ENCODE measurements at regions of chrX and their contacts with region 1.

Region 1: DNA sequence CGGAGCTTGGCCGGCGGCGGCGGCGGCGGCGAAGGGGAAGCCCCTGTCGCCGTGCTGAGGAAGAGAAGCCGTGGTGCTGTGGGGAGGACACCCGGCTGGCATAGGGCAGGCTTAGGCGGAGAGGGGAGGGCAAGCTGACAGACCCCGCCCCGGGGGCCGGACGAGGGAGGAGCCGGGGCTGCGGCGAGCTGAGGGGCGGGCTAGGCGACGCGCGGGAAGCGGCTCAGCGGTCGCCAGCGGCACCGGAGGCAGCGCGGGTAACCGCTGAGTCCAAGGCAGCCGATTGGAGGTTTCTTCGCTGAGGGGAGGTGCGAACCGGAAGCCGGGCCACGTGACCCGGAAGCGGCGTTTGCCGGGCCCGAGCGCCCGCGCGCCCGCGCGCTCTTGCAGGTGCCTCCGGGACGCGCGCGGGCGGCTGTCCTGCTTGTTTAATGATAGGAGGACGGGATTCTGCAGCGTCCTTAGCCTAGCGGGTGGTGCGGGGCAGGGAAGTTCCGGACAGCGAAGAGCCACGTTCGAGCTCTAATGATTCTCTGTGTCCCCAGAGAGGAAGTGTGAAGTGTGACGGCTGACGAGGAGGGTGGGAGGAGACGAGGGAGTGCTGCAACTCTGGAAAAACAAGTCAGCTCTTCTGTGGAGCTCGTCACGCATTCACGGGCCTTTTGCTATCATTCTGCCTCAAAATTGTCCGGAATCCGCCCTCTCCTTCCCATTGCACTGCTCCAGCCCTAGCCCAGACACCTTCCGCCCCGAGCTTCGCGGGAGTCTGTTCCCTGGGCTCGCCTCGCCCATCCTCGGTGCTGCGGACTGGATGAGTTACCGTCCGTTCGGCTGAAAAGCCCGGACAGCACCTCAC is at the start of gene AP1S2:
- DNase-seq: peak; percentile 95
- H3K4me3 ChIP-seq: peak within 1 kb of the TSS; percentile 17 to 84 (median 79)
- H3K27ac ChIP-seq: peak within 1 kb of the TSS; percentile 21
- H3K4me1 ChIP-seq: peaks cover 14% of the 10 kb centered on the region
- H3K27me3 ChIP-seq: no peaks in the 10 kb centered on the region
- CTCF ChIP-seq: no peak
- POLR2A ChIP-seq: no peak
- total RNA-seq, gene AP1S2: 25.0 and 37.3 TPM in 2 replicates

Region 2: GRCh38 chrX:15686818-15687685 is 167.9 kb before region 1 on chrX:
- CTCF ChIA-PET with region 1: no interaction called
- POLR2A ChIA-PET with region 1: no interaction called
- dilution Hi-C with region 1: no loop called
- intact Hi-C with region 1: loop called (anchors 2 kb)
- DNase-seq: peak; percentile 56
- H3K4me3 ChIP-seq: no peak overlapping the region
- H3K27ac ChIP-seq: no peak overlapping the region
- H3K4me1 ChIP-seq: no peaks in the 10 kb centered on the region
- H3K27me3 ChIP-seq: no peaks in the 10 kb centered on the region
- CTCF ChIP-seq: peak; percentile 47 to 55
- POLR2A ChIP-seq: no peak

Region 3: GRCh38 chrX:15973299-15973698 is 118.4 kb after region 1 on chrX:
- CTCF ChIA-PET with region 1: interaction called, 11 read pairs
- POLR2A ChIA-PET with region 1: no interaction called
- dilution Hi-C with region 1: no loop called
- intact Hi-C with region 1: loop called (anchors 5 kb)
- DNase-seq: peak; percentile 36
- H3K4me3 ChIP-seq: no peak overlapping the region
- H3K27ac ChIP-seq: no peak overlapping the region
- H3K4me1 ChIP-seq: no peaks in the 10 kb centered on the region
- H3K27me3 ChIP-seq: no peaks in the 10 kb centered on the region
- CTCF ChIP-seq: peak; percentile 26 to 41
- POLR2A ChIP-seq: no peak

Region 4: DNA sequence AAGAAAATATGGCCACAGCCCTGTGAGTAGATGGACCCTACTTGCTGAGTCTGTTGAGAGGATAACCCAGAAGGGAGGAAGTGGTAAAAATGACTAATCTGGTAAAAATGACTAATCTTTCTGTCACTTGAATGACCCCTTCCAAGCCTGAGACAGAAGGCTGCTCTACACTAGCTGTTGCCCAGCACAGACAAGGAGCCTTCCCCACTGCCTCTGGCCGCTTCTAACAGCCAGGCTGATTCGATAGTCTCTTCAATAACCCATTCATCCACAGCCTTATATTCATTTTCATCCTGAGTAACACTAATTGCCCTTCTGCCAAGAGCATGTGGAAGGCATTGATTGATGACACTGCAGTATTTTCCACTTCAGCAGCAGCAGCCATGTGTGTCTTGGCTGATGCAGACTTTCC is 330.8 kb after region 1 on chrX:
- CTCF ChIA-PET with region 1: no interaction called
- POLR2A ChIA-PET with region 1: no interaction called
- dilution Hi-C with region 1: no loop called
- intact Hi-C with region 1: loop called (anchors 2 kb)
- DNase-seq: peak; percentile 74
- H3K4me3 ChIP-seq: no peak overlapping the region
- H3K27ac ChIP-seq: no peak overlapping the region
- H3K4me1 ChIP-seq: peaks cover 31% of the 10 kb centered on the region
- H3K27me3 ChIP-seq: no peaks in the 10 kb centered on the region
- CTCF ChIP-seq: no peak
- POLR2A ChIP-seq: no peak

Region 5: DNA sequence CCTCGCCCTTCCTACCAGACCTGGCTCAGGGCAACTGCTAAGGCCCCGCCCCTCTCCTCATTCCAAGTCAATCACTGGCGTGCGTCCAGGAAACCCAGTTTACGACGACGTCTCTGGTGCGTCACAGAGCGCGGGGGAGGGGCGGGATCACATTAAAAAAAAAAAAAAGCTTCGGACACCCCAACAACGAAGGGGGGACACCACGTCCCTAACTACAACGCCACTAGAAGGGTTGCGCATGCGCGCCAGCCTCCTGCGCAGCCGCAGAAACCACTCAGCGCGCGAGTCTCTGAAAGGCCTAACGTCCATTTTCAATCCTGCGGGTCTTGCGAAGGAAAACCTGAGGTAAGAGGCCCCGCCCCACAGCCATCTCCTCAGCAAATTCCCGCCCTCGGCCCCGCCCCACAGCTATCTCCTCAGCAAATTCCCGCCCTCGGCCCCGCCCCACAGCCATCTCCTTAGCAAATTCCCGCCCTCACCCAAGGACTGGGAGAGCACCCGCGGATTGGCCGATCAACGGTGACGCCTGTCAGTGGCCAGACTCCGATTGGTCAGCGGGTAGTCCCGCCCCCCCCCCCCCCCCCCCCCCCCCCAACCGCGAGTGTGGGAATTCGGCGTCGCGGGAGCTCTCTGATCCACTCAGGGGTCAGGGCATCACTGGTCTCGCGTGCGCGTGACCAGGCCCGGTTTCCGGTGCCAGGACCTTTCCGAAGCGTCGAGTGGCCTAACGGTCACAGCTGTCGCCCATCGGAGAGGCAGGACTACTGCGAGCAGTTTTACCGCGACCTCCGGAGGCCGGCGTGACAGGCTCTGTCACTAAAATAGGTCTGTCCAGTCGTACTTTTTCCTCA is 1882.1 kb after region 1 on chrX and contains the start of gene SCML1:
- CTCF ChIA-PET with region 1: no interaction called
- POLR2A ChIA-PET with region 1: no interaction called
- dilution Hi-C with region 1: no loop called
- intact Hi-C with region 1: loop called (anchors 10 kb)
- DNase-seq: peak; percentile 97
- H3K4me3 ChIP-seq: peak within 1 kb of the TSS; percentile 61 to 88 (median 63)
- H3K27ac ChIP-seq: peak within 1 kb of the TSS; percentile 77
- H3K4me1 ChIP-seq: no peaks in the 10 kb centered on the region
- H3K27me3 ChIP-seq: no peaks in the 10 kb centered on the region
- CTCF ChIP-seq: no peak
- POLR2A ChIP-seq: no peak
- total RNA-seq, gene SCML1: 10.1 and 12.4 TPM in 2 replicates